ENCODE measurements at regions of chr12 and their contacts with region 1.

Region 1: GRCh38 chr12:64323476-64324225 is 66.9 kb downstream of the C12orf56 start:
- DNase-seq: peak; percentile 77 to 80
- H3K4me3 ChIP-seq: no peak overlapping the region
- H3K4me3 Mint-ChIP-seq: peak overlapping the region; percentile 28
- H3K27ac Mint-ChIP-seq: no peak overlapping the region
- H3K4me1 ChIP-seq: peaks cover 28% of the 10 kb centered on the region
- H3K4me1 Mint-ChIP-seq: peaks cover 15% of the 10 kb centered on the region
- H3K27me3 ChIP-seq: no peaks in the 10 kb centered on the region
- H3K27me3 Mint-ChIP-seq: no peaks in the 10 kb centered on the region
- CTCF ChIP-seq: no peak

Region 2: GRCh38 chr12:63917864-63918799 is 405.5 kb before region 1 on chr12:
- CTCF ChIA-PET with region 1: no interaction called
- POLR2A ChIA-PET with region 1: no interaction called
- intact Hi-C with region 1: loop called (anchors 5 kb)
- DNase-seq: peak; percentile 52 to 69
- H3K4me3 ChIP-seq: no peak overlapping the region
- H3K4me3 Mint-ChIP-seq: peak overlapping the region; percentile 8
- H3K27ac Mint-ChIP-seq: peak overlapping the region; percentile 77
- H3K4me1 ChIP-seq: peaks cover 74% of the 10 kb centered on the region
- H3K4me1 Mint-ChIP-seq: peaks cover 47% of the 10 kb centered on the region
- H3K27me3 ChIP-seq: no peaks in the 10 kb centered on the region
- H3K27me3 Mint-ChIP-seq: no peaks in the 10 kb centered on the region
- CTCF ChIP-seq: no peak

Region 3: DNA sequence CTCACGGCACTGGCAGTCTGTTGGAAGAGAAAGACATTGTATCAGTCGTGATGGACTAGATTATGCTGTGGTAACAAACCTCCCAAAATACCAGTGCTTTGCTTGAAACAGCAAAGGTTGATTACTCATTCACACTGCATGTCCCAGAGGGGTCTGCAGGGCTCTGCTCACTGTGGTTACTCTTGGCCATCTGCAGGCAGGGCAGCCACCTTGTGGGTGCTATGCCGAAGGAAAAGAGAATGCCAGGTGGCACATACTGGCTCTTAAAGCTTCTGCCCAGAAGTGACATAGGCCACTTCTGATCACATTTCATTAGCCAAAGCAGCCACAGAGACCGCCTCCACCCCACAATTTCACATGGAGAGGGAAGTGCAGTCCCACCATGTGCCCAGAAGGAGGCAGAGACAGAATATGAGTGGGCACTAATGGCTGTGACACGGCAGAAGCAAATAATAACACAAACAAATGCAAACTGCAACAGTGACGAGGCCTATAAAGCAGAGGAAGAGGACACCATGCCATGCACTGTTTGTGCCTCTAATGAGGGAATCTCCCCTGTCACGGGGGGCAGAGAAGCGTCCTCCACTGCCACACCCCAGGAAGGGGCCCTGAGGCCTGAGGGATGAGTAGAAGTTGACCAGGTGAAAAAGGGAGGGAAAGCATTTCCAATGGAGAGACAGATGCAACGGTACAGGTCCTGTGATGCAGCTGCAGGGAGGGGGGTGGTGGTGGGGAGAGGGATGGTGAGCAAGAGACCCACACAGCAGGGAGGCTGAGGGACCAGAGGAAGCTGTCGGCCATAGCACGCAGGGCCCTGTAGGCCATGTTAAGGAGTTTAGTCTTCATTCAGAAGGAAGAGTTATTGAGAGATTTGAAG is 49.9 kb before region 1 on chr12:
- CTCF ChIA-PET with region 1: no interaction called
- POLR2A ChIA-PET with region 1: interaction called, 3 read pairs
- intact Hi-C with region 1: loop called (anchors 5 kb)
- DNase-seq: peak in 1 of 2 experiments; percentile 30
- H3K4me3 ChIP-seq: no peak overlapping the region
- H3K4me3 Mint-ChIP-seq: no peak overlapping the region
- H3K27ac Mint-ChIP-seq: no peak overlapping the region
- H3K4me1 ChIP-seq: no peaks in the 10 kb centered on the region
- H3K4me1 Mint-ChIP-seq: no peaks in the 10 kb centered on the region
- H3K27me3 ChIP-seq: no peaks in the 10 kb centered on the region
- H3K27me3 Mint-ChIP-seq: no peaks in the 10 kb centered on the region
- CTCF ChIP-seq: peak; percentile 30 to 41

Region 4: GRCh38 chr12:64286521-64286920 is 37.1 kb before region 1 on chr12:
- CTCF ChIA-PET with region 1: no interaction called
- POLR2A ChIA-PET with region 1: no interaction called
- intact Hi-C with region 1: no loop called
- DNase-seq: no peak
- H3K4me3 ChIP-seq: no peak overlapping the region
- H3K4me3 Mint-ChIP-seq: no peak overlapping the region
- H3K27ac Mint-ChIP-seq: no peak overlapping the region
- H3K4me1 ChIP-seq: no peaks in the 10 kb centered on the region
- H3K4me1 Mint-ChIP-seq: no peaks in the 10 kb centered on the region
- H3K27me3 ChIP-seq: no peaks in the 10 kb centered on the region
- H3K27me3 Mint-ChIP-seq: no peaks in the 10 kb centered on the region
- CTCF ChIP-seq: no peak

Region 5: DNA sequence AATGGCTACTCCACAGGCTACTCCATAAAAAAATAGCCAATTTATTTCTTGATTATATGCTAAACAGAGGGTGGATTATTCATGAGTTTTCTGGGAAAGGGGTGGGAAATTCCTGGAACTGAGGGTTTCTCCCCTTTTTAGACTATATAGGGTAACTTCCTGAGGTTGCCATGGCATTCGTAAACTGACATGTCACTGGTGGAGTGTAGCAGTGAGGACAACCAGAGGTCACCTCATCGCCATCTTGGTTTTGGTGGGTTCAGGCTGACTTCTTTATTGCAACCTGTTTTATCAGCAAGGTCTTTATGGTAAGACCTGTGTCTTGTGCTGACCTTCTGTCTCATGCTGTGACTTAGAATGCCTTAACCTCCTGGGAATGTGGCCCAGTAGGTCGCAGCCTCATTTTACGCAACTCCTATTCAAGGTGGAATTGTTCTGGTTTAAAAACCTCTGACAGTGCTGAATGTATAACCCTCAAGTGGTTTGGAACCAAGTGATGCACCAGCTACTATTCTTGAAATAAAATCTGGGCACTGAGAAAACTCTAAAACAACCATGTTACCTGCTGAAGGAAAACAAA is 39.2 kb after region 1 on chr12:
- CTCF ChIA-PET with region 1: no interaction called
- POLR2A ChIA-PET with region 1: no interaction called
- intact Hi-C with region 1: loop called (anchors 5 kb)
- DNase-seq: peak in 1 of 2 experiments; percentile 20
- H3K4me3 ChIP-seq: no peak overlapping the region
- H3K4me3 Mint-ChIP-seq: no peak overlapping the region
- H3K27ac Mint-ChIP-seq: peak overlapping the region; percentile 22
- H3K4me1 ChIP-seq: peaks cover 20% of the 10 kb centered on the region
- H3K4me1 Mint-ChIP-seq: no peaks in the 10 kb centered on the region
- H3K27me3 ChIP-seq: no peaks in the 10 kb centered on the region
- H3K27me3 Mint-ChIP-seq: no peaks in the 10 kb centered on the region
- CTCF ChIP-seq: no peak

Region 6: DNA sequence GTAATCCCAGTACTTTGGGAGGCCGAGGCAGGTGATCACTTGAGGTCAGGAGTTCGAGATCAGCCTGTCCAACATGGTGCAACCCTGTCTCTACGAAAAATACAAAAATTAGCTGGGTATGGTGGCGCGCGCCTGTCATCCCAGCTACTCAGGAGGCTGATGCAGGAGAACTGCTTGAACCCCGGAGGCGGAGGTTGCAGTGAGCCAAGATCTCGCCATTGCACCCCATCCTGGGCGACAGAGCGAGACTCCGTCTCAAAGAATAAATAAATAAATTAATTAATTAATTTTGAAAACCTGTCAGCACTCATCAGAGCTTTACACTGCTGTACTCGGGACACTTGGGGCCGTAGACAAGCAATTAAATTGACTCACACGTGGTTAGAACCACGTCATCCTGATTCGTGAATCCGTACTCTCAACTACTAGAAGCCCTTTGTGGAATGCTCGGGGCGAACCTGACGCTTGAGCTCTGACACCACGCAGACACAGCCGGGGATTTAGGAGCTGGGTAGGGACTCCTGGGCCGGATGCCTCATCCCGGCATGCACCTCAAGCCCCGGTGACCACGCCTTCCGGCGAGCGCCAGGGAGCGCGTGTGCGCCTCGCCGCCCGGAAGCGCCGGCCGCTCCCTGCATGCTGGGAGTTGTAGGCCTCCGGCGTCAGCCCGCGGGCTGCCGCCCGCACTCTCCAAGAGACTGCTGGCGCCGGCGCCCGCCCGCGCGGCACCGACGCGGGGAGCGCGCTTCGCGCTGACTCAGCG is 80.2 kb after region 1 on chr12 and contains the start of gene XPOT:
- CTCF ChIA-PET with region 1: no interaction called
- POLR2A ChIA-PET with region 1: interaction called, 17 read pairs
- intact Hi-C with region 1: loop called (anchors 1 kb)
- DNase-seq: peak; percentile 96
- H3K4me3 ChIP-seq: peak within 1 kb of the TSS; percentile 95
- H3K4me3 Mint-ChIP-seq: peak within 1 kb of the TSS; percentile 91
- H3K27ac Mint-ChIP-seq: peak within 1 kb of the TSS; percentile 99
- H3K4me1 ChIP-seq: no peaks in the 10 kb centered on the region
- H3K4me1 Mint-ChIP-seq: peaks cover 7% of the 10 kb centered on the region
- H3K27me3 ChIP-seq: no peaks in the 10 kb centered on the region
- H3K27me3 Mint-ChIP-seq: no peaks in the 10 kb centered on the region
- CTCF ChIP-seq: no peak
- total RNA-seq, gene XPOT: 164 and 174 TPM in 2 replicates